ENCODE measurements at regions of chr11 and their contacts with region 1.

Region 1: GRCh38 chr11:74443071-74443864 is 24.1 kb downstream of the KCNE3 start:
- DNase-seq: peak; percentile 71
- H3K4me3 Mint-ChIP-seq: no peak overlapping the region
- H3K27ac Mint-ChIP-seq: peak overlapping the region; percentile 47
- H3K4me1 Mint-ChIP-seq: peaks cover 11% of the 10 kb centered on the region
- H3K27me3 Mint-ChIP-seq: no peaks in the 10 kb centered on the region
- CTCF ChIP-seq: peak; percentile 53

Region 2: GRCh38 chr11:74371279-74372049 is 71.8 kb before region 1 on chr11:
- CTCF ChIA-PET with region 1: no interaction called
- POLR2A ChIA-PET with region 1: no interaction called
- intact Hi-C with region 1: no loop called
- DNase-seq: peak; percentile 54
- H3K4me3 Mint-ChIP-seq: no peak overlapping the region
- H3K27ac Mint-ChIP-seq: peak overlapping the region; percentile 55
- H3K4me1 Mint-ChIP-seq: peaks cover 5% of the 10 kb centered on the region
- H3K27me3 Mint-ChIP-seq: no peaks in the 10 kb centered on the region
- CTCF ChIP-seq: no peak

Region 3: DNA sequence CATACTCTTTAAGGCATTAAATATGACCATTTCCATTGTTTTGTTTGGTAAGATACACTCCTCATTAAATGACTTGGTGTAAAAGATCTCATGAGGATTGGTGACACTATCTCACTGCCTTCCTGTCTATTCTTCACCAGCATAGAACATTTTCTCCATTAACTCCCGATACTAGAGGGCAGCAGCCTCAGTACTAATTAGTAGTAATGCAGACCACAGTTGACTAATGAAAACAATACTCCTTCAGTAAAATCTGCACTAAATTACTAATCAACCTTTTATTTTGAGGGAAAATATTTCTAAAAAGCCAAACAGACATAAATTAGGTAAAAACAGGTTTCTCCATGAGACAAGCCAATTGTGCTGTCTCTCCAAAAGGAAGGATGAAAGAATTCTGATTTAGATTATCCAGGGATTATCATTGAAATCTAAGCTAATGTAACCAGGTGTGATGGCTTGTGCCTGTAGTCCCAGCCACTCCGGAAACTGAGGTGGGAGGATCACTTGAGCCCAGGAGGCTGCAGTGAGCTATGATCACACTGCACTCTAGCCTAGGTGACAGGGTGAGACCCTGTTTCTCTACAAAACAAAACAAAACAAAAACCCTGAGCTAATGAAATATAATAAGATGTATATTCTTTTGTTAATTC is 54.5 kb before region 1 on chr11:
- CTCF ChIA-PET with region 1: interaction called, 94 read pairs
- POLR2A ChIA-PET with region 1: interaction called, 3 read pairs
- intact Hi-C with region 1: loop called (anchors 1 kb)
- DNase-seq: peak; percentile 63
- H3K4me3 Mint-ChIP-seq: no peak overlapping the region
- H3K27ac Mint-ChIP-seq: no peak overlapping the region
- H3K4me1 Mint-ChIP-seq: peaks cover 14% of the 10 kb centered on the region
- H3K27me3 Mint-ChIP-seq: no peaks in the 10 kb centered on the region
- CTCF ChIP-seq: peak; percentile 52